ENCODE measurements at regions of chr14 and their contacts with region 1.

Region 1: DNA sequence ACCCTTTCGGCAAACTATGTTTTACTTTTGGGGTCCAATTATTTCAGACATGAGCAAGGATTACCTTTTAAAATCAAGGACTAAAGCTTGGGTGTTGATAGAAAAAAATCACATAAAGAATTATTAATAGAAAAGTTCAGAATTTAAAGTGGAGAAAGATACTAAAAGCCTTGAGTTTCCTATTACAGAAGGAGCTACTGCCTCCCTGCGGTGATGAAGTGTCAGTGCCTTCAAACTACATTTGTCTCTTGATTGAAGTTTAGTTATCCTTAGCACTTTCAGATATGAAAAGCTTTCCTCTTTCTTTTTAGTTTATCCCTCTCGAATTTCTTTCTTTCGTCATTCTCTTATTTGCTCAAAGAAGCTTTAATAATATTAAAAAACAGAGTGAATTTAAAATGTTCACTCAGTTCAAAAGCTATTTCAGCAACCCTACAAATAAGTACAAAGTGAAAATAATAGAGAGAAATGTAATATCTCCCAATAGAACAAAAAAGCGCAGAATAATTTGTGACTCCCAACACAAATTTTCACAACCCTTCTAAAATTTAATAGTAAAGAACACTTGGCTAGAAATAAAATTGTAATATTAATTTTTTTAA is 87.6 kb downstream of the SEC23A start:
- DNase-seq: peak in 1 of 2 donors; percentile 25
- ATAC-seq: peak in 1 of 8 donors; percentile 38
- H3K4me3 ChIP-seq: no peak overlapping the region
- H3K27ac ChIP-seq: no peak overlapping the region
- H3K4me1 ChIP-seq: peaks cover 0 to 5% (median 0%) of the 10 kb centered on the region in 9 donors
- H3K27me3 ChIP-seq: no peaks in the 10 kb centered on the region
- CTCF ChIP-seq: peak; percentile 61 to 93 (median 88)

Region 2: DNA sequence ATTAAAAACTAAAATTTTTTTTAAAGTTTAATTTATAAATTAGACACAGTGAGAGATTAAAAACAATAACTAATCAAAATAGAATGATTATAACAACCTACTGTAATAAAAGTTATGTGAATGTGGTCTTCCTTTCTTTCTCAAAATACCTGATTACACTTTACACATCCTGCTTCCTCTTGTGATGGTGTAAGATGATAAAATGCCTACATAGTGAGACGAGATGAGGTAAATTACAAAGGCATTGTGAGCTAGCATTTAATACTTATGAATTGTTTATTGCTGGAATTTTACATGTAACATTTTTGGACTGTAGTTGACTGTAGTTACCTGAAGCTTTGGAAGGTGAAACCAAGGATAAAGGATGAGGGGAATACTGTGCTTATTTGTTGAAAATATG is 665.4 kb before region 1 on chr14:
- intact Hi-C with region 1: loop called in 1 of 10 experiments (anchors 5 kb)
- DNase-seq: no peak
- ATAC-seq: no peak
- H3K4me3 ChIP-seq: no peak overlapping the region
- H3K27ac ChIP-seq: no peak overlapping the region
- H3K4me1 ChIP-seq: no peaks in the 10 kb centered on the region
- H3K27me3 ChIP-seq: no peaks in the 10 kb centered on the region
- CTCF ChIP-seq: no peak

Region 3: DNA sequence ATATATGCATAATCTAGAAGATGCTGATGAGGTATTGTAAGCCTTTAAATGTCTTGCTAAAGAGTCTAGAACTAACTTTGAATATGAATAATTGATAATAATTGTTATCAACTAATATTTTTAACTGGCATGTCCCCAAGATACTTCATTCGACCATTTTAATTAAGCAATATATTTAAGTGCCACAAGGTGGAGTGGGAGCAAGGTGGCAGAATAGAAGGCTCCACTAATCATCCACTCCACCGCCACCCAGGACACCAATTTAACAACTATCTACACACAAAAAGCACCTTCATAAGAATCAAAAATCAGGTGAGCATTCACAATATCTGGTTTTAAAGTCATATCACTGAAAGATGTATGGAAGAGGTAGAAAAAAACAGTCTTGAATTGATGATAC is 322.0 kb before region 1 on chr14:
- intact Hi-C with region 1: no loop called
- DNase-seq: no peak
- ATAC-seq: no peak
- H3K4me3 ChIP-seq: no peak overlapping the region
- H3K27ac ChIP-seq: no peak overlapping the region
- H3K4me1 ChIP-seq: no peaks in the 10 kb centered on the region
- H3K27me3 ChIP-seq: no peaks in the 10 kb centered on the region
- CTCF ChIP-seq: no peak

Region 4: DNA sequence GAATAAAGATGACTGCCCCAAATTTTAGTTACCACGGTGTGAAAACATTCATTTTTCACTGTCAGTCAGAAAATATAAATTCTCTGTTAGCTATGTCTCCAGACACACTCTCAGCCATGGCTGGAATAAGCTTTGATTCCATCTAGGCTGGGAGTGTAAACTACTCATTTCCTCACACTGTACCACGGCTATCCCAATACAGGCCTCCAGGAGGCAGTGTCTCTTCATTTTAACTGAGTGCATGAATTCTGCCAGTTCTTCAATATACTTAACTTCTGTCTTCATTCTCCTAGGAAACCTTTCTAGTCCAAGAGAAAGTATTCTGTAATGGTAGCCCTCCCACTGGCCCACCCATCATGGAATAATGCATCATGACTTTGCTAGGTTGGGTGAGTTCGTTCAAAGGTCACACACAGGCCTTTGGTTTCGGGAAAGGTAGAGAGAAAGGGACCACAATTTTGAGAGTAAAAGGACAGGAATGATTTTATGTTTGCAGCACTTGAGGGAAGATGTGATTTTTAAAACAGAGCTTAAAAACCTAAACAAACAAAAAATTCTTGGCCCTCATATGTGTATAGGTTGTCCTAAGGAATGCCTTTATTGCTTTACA is 293.5 kb before region 1 on chr14:
- intact Hi-C with region 1: loop called in 8 of 10 experiments (anchors 2 to 10 kb)
- DNase-seq: peak; percentile 14 to 54
- ATAC-seq: peak in 7 of 8 donors; percentile 61 to 81 (median 75)
- H3K4me3 ChIP-seq: no peak overlapping the region
- H3K27ac ChIP-seq: no peak overlapping the region
- H3K4me1 ChIP-seq: peaks cover 0 to 11% (median 0%) of the 10 kb centered on the region in 9 donors
- H3K27me3 ChIP-seq: no peaks in the 10 kb centered on the region
- CTCF ChIP-seq: peak; percentile 53 to 85 (median 76)